Activated B cell treated with CpG ODN at 0.5 μM for 24 hours (primary cell): ENCODE measurements at regions of chr5 and their contacts with region 1.

Region 1: DNA sequence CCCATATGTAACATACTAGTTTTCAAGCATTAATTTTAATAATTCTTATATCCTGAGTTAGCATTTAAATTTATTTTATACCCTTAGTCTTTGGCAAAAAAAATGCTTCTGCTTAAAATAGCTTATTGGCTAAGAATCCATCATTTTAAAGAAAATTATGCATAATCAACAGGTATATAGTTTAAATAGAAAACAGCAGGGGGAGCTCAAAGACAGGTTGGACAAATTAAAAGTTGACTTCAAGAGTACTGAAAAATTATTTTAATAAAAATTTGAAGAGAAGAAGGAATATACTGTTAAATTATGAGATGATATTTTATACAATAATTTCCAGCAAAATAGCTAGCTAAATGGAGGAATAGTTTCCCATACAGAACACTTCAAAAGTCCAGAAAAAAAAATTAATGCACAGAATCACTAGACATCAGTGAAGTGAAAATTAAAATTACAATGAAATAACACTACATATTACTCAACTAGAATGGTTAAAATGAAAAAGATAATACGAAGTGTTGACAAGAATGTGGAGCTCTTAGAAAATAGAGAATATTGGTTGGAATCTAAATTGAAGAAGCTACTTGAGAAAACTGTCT is 387.1 kb downstream of the PDE4D start:
- DNase-seq: no peak
- ATAC-seq: no peak
- H3K4me3 Mint-ChIP-seq: no peak overlapping the region
- H3K27ac Mint-ChIP-seq: no peak overlapping the region
- H3K4me1 Mint-ChIP-seq: no peaks in the 10 kb centered on the region
- H3K27me3 Mint-ChIP-seq: no peaks in the 10 kb centered on the region
- CTCF ChIP-seq: no peak

Region 2: GRCh38 chr5:59390074-59390659 is 116.2 kb before region 1 on chr5:
- CTCF ChIA-PET with region 1: interaction called, 5 read pairs
- POLR2A ChIA-PET with region 1: no interaction called
- intact Hi-C with region 1: loop called (anchors 5 kb)
- DNase-seq: no peak
- ATAC-seq: no peak
- H3K4me3 Mint-ChIP-seq: no peak overlapping the region
- H3K27ac Mint-ChIP-seq: no peak overlapping the region
- H3K4me1 Mint-ChIP-seq: peaks cover 14% of the 10 kb centered on the region
- H3K27me3 Mint-ChIP-seq: no peaks in the 10 kb centered on the region
- CTCF ChIP-seq: peak; percentile 75

Region 3: DNA sequence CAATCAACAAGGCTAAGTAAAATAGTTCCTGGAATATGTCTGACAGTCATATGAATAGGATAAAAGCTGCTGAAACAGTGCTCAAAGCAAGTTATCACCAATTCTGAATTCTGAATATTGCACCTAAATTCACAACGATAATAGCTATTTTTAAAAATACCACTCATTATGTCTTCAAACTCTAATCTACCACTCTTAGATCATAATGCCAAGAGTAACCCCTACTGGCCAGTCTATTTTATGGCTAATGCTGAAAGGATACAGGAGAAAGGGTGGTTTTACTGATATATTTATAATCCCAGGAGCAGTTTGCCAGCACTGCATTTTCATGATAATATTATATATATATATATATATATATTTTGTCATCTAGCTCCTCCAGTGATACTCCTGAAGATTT is 154.4 kb after region 1 on chr5:
- CTCF ChIA-PET with region 1: interaction called, 72 read pairs
- POLR2A ChIA-PET with region 1: no interaction called
- intact Hi-C with region 1: loop called (anchors 1 kb)
- DNase-seq: no peak
- ATAC-seq: peak; percentile 40
- H3K4me3 Mint-ChIP-seq: no peak overlapping the region
- H3K27ac Mint-ChIP-seq: no peak overlapping the region
- H3K4me1 Mint-ChIP-seq: peaks cover 47% of the 10 kb centered on the region
- H3K27me3 Mint-ChIP-seq: no peaks in the 10 kb centered on the region
- CTCF ChIP-seq: no peak

Region 4: DNA sequence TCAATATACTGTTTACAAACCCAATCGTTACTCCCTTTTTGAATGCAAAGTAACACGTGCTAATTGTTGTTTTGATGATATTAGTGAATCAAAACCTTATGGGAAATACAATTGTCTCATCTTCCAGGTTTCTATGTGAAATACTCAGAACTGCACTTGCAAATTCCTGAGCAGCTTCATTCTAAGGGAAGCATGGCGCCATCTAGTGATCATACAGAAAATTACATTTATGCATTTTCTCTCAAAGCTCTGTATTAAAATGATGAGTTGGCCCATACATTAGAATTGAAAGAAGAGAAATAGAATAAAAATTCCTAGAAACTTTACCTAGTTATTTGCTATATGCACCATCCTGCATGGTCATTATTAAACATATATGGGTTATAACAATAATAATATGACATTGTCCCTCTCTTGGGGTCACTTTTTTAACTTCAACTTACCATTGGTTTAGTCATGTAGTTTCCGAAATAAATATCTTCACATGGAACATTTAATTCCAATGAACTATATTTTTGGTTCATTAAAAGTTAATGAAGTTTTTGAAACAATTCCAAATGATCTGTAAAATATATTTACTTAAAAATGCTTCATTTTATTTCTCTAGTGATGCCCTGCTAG is 167.2 kb after region 1 on chr5:
- CTCF ChIA-PET with region 1: interaction called, 69 read pairs
- POLR2A ChIA-PET with region 1: no interaction called
- intact Hi-C with region 1: loop called (anchors 1 kb)
- DNase-seq: no peak
- ATAC-seq: peak; percentile 28
- H3K4me3 Mint-ChIP-seq: no peak overlapping the region
- H3K27ac Mint-ChIP-seq: no peak overlapping the region
- H3K4me1 Mint-ChIP-seq: peaks cover 10% of the 10 kb centered on the region
- H3K27me3 Mint-ChIP-seq: no peaks in the 10 kb centered on the region
- CTCF ChIP-seq: peak; percentile 75

Region 5: GRCh38 chr5:59724482-59725391 is 218.4 kb after region 1 on chr5:
- CTCF ChIA-PET with region 1: interaction called, 8 read pairs
- POLR2A ChIA-PET with region 1: no interaction called
- intact Hi-C with region 1: loop called (anchors 1 kb)
- DNase-seq: no peak
- ATAC-seq: peak; percentile 75
- H3K4me3 Mint-ChIP-seq: no peak overlapping the region
- H3K27ac Mint-ChIP-seq: no peak overlapping the region
- H3K4me1 Mint-ChIP-seq: peaks cover 13% of the 10 kb centered on the region
- H3K27me3 Mint-ChIP-seq: no peaks in the 10 kb centered on the region
- CTCF ChIP-seq: peak; percentile 38

Region 6: DNA sequence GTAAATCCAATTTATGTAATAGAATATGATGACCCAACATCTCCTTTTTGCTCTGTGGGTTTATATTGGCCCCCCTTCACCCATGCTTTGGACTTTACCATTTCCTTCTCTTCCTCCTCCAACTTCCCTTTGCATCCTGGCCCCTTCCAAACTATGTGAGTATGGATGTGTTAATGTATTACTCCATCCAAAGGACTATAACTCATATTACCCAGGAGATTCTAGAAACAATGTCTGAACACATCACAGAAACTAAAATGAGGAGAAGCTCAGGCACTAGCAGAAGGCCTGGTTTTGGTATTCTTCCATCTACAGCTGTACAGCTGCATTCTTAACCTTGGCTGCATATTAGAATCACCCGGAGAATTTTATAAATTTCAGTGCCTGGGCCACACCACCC is 276.5 kb after region 1 on chr5:
- CTCF ChIA-PET with region 1: no interaction called
- POLR2A ChIA-PET with region 1: no interaction called
- intact Hi-C with region 1: no loop called
- DNase-seq: no peak
- ATAC-seq: no peak
- H3K4me3 Mint-ChIP-seq: no peak overlapping the region
- H3K27ac Mint-ChIP-seq: no peak overlapping the region
- H3K4me1 Mint-ChIP-seq: peaks cover 11% of the 10 kb centered on the region
- H3K27me3 Mint-ChIP-seq: no peaks in the 10 kb centered on the region
- CTCF ChIP-seq: no peak